ENCODE measurements at regions of chr1 and their contacts with region 1.

Region 1: GRCh38 chr1:89578151-89578550 is 53.5 kb downstream of the LRRC8B start:
- DNase-seq: no peak
- ATAC-seq: no peak
- H3K4me3 Mint-ChIP-seq: no peak overlapping the region
- H3K27ac Mint-ChIP-seq: no peak overlapping the region
- H3K4me1 Mint-ChIP-seq: peaks cover 47% of the 10 kb centered on the region
- H3K27me3 Mint-ChIP-seq: no peaks in the 10 kb centered on the region

Region 2: DNA sequence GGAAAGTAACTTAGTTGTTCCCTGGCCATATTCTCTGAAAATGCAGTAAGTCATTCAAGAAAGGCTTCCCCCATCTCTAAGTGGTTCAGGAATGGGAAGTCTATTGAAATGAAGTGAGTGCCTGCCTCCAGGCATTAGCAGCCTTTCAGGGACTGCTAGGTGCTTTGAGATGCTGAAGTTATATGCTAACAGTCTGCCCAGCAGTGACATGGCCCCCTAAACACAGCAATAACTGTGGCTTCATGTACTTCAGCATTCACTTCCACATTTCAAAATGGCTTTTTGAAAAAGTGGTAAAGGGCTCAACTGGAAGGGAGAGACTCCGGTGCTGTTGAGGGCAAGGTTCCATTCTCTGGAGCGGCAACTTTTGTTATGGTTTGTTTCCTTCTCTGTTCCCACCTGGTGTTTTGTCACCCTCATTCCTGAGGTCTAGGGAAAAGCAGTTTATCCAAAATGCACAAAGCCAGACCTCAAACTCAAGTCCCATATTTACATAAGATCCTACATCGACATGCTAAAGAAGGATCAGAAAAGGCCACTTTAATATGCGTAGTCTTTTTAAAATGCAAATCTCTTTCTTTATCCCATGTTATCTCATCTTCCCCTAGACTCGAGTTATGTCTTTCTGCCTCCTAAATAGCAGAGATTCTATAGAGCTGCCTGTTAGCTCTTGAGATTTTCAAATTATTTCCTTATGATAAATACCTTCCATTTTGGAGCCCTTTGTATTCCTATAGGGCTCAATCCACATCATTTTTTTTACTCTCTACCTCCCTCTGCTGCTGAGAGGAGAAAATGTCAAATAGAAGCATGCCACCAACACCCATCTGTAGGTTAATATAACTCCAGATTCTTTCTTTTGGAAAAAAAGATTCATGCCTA is 20.5 kb after region 1 on chr1:
- CTCF ChIA-PET with region 1: interaction called, 13 read pairs
- POLR2A ChIA-PET with region 1: interaction called, 3 read pairs
- intact Hi-C with region 1: no loop called
- DNase-seq: no peak
- ATAC-seq: peak; percentile 14
- H3K4me3 Mint-ChIP-seq: no peak overlapping the region
- H3K27ac Mint-ChIP-seq: peak overlapping the region; percentile 99
- H3K4me1 Mint-ChIP-seq: peaks cover 85% of the 10 kb centered on the region
- H3K27me3 Mint-ChIP-seq: no peaks in the 10 kb centered on the region

Measured in activated CD4-positive, alpha-beta T cell treated with anti-CD3 and anti-CD28 coated beads for 36 hours (primary cell).